Mammary epithelial cell (primary cell): ENCODE measurements at regions of chr3 and their contacts with region 1.

Region 1: DNA sequence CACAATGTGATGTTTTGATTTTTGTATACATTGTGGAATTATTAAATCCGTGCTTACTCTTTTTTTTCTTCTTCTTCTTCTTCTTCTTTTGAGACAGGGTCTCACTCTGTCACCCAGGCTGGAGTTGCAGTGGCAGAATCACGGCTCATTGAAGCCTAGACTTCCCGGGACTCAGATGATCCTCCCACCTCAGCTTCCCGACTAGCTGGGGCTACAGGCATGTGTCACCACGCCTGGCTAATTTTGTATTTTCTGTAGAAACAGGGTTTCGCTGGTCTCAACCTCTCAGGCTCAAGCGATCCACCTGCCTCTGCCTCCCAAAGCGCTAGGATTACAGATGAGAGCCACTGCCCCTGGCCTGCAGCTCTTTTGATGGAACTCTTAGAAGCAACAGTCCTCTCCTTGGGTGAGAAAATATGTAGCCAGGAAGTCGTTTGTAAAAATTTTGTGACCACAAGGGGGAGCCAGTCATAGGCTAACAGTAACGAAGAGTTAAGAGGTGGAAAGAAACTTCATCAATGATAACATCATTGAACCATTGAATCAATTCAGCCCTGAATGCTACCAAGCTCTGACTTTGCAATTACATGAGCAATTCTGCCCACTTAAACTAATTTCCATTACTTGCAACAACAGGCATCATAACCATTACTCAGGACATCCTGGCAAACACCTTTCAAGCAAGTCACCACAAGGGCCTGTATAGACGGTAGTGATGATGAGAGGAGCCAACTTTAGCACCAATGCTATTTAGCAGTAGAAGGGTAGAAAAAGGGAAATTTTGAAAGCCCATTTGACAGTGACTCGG is 16.7 kb upstream of the CMTM7 start:
- DNase-seq: peak; percentile 66
- H3K4me3 ChIP-seq: no peak overlapping the region
- H3K27ac ChIP-seq: no peak overlapping the region
- H3K4me1 ChIP-seq: peaks cover 10% of the 10 kb centered on the region
- H3K27me3 ChIP-seq: no peaks in the 10 kb centered on the region
- CTCF ChIP-seq: peak; percentile 50 to 68

Region 2: DNA sequence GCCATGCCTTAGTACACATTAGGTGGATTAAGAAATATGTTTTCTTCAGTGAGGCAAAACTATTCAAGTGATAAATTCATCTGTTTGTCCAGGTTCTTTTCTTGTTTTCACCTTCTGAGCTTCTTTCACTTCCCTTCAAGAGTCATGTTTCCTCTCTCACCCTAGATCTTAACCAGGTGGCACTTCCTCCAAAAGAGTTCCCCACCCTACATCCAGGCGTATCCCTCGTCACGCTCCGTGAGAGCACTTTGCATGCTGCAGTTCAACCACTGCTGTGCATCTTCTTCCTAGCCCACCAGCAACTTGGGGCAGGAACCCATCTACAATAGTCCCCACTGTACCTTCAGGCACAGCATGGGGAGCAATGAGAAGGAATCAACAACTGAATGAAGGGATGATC is 422.8 kb before region 1 on chr3:
- CTCF ChIA-PET with region 1: no interaction called
- dilution Hi-C with region 1: no loop called
- in situ Hi-C with region 1: no loop called
- intact Hi-C with region 1: no loop called
- DNase-seq: no peak
- H3K4me3 ChIP-seq: no peak overlapping the region
- H3K27ac ChIP-seq: no peak overlapping the region
- H3K4me1 ChIP-seq: peaks cover 11% of the 10 kb centered on the region
- H3K27me3 ChIP-seq: no peaks in the 10 kb centered on the region
- CTCF ChIP-seq: no peak

Region 3: DNA sequence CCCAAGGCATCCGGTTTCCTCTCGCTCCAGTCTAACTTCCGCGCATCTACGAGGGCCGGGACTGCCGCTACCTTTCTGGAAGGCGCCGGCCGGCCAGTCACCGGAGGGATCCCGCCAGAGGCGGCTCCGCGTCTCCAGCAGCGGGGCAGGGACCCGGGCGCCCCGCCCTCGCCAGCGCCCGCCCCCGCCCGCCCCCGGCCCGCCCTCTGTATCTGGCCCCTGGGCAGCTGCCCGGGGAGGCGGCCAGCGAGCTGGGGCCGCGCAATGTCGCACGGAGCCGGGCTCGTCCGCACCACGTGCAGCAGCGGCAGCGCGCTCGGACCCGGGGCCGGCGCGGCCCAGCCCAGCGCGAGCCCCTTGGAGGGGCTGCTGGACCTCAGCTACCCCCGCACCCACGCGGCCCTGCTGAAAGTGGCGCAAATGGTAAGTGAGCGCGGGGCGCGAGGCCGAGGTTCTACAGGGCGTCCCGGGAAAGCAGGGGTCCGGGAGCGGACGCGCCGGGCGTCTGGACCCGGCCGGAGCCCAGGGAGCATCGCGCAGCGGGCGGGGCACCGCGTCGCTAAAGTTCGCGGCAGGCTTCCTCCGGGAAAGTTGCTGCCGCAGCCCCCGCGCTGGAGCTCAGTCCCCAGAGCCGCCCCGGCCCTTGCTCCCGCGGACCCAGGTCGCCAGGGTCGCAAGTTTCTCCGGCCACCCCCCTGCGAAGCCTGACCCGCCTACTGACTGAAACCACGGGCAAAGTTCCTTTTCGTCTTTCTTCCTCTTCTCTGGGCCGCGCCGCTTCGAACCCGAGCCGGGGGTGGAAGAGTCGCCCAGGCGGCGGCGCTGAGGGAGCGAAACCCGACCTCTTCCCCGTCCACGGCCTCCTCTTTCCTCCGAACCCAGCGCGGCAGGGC is 16.9 kb after region 1 on chr3 and contains the start of gene CMTM7:
- CTCF ChIA-PET with region 1: interaction called, 3 read pairs
- dilution Hi-C with region 1: no loop called
- in situ Hi-C with region 1: no loop called
- intact Hi-C with region 1: loop called (anchors 1 kb)
- DNase-seq: peak; percentile 80
- H3K4me3 ChIP-seq: peak within 1 kb of the TSS; percentile 84 to 87 (median 84)
- H3K27ac ChIP-seq: peak within 1 kb of the TSS; percentile 73
- H3K4me1 ChIP-seq: peaks cover 21% of the 10 kb centered on the region
- H3K27me3 ChIP-seq: no peaks in the 10 kb centered on the region
- CTCF ChIP-seq: peak in 1 of 2 donors; percentile 14
- total RNA-seq, gene CMTM7: 35.8 to 62.1 TPM